ENCODE measurements at regions of chr5 and their contacts with region 1.

Region 1: GRCh38 chr5:57442080-57442839 is 40.4 kb downstream of the ACTBL2 start:
- DNase-seq: no peak

Region 2: GRCh38 chr5:57494104-57495098 is 52.1 kb after region 1 on chr5:
- CTCF ChIA-PET with region 1: no interaction called
- POLR2A ChIA-PET with region 1: interaction called, 10 read pairs
- DNase-seq: peak; percentile 15